Dorsolateral prefrontal cortex (tissue), 120 donors: ENCODE measurements at regions of chr5 and their contacts with region 1.

Region 1: DNA sequence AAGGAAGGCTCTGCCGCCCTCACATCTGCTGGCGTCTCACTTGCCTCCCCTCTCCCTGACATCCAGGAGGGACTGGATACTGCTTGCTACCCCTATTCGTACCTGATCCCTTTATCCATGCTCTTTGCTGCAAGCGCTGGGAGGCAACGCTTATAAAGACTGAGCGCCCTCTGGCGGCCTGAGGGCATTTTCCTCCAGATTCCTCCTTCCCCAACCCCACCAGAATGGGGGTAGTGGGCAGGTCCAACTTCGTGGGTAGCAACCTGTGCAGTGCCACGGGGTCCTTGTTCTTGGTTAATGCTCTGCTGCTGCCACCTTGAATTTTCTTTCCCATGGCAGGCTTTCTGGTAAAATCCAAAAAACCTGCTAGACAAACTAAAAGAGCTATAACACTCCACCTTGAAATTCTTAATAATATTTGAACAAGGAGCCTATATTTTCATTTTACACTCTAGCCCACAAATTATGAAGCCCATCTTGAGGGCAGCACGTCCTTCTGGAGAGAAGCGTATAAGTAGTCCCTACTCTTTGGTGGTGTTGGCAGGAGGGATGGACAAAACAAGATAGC is 52.4 kb downstream of the JADE2 start:
- DNase-seq: peak in 9 of 10 donors; percentile 75 to 85 (median 80)
- H3K4me3 ChIP-seq: peak overlapping the region in 1 of 59 donors; percentile 7
- H3K27ac ChIP-seq: peak overlapping the region in 10 of 59 donors; percentile 0 to 65 (median 21)
- H3K27me3 ChIP-seq: no peaks in the 10 kb centered on the region
- CTCF ChIP-seq: peak; percentile 60 to 92 (median 83)

Region 2: DNA sequence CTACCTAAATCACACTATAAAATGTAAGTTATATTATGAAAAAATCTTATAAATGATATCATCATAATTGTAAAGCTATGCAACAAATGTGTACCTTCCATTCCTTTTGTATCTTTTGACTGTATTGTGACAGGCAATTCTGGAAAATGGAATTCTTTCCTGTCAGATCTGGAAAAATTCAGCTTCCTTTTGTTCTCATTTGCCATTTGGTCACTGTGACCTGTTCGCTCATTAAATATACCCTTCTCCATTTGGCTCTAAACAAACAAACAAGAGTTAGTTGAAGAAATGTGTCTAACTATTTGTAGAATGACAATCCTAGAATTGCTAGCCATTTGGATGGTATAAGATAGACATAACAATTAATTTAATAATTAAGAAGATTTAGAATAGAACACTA is 273.6 kb before region 1 on chr5:
- intact Hi-C with region 1: loop called (anchors 5 kb)
- DNase-seq: no peak
- H3K4me3 ChIP-seq: no peak overlapping the region
- H3K27ac ChIP-seq: no peak overlapping the region
- H3K27me3 ChIP-seq: no peaks in the 10 kb centered on the region
- CTCF ChIP-seq: no peak

Region 3: DNA sequence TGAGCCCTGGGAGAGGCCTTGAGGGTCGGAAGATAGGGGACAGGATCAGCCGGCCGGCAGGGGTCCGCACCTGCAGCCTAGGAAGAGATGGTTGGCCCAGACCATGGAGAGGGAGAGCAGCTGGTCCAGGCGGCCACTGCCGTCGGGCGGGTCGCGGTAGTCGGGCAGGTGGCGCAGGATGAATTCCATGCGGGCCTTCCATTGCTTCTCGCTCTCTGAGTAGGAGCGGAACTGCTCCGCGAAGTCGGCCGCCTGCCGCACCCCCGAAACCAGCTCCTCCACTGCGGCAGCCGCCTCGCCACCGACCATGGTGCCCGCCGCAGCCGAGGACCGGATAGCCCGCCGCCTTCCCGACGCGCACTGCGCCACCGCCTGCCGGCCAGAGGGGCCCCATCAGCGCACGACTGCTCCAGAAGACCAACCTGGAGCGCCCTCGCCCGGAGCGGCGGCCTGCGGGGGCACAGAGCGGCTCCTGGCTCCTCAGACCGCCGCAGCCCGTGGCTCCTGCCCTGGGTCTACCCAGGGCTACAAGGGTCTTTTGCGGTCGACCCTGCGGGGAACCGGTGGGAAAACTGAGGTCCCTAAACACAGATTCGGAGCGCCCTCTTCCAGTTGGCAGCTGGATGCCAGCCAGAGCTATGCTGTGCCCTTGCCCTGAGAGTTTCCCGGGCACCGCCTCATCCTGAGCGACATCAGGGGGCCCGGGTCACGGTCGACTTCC is 166.2 kb before region 1 on chr5 and contains the start of gene CDKN2AIPNL:
- intact Hi-C with region 1: loop called (anchors 2 to 5 kb)
- DNase-seq: peak; percentile 88 to 97 (median 92)
- H3K4me3 ChIP-seq: peak within 1 kb of the TSS; percentile 62 to 99 (median 89)
- H3K27ac ChIP-seq: peak within 1 kb of the TSS; percentile 4 to 95 (median 84)
- H3K27me3 ChIP-seq: no peaks in the 10 kb centered on the region
- CTCF ChIP-seq: peak; percentile 73 to 99 (median 94)
- total RNA-seq, gene CDKN2AIPNL: 16.6 to 49.6 (median 33.7) TPM

Region 4: DNA sequence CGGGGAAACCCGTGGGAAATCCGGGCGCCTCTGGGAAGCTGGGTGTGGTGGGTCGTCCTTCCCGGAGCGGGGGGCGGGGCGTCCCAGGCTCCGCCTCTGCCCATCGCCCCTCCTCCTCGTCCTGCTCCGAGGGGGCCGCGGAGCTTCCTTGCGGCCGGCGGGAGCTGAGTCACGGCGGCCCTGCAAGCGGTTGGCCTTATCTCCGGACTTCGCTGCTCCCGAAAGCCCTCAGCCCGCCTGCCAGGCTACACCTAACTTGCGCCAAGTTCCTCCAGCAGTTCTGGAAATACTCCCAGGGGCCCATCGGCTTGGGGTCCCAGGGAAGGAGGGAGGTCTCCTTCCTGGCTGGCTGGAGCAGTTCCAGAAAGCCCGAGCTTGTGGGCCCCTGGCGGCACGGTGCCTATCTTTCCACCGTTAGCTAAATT is 112.1 kb before region 1 on chr5:
- intact Hi-C with region 1: loop called in 1 of 2 experiments (anchors 5 kb)
- DNase-seq: peak; percentile 69 to 89 (median 76)
- H3K4me3 ChIP-seq: peak overlapping the region; percentile 36 to 79 (median 66)
- H3K27ac ChIP-seq: peak overlapping the region; percentile 76 to 99 (median 96)
- H3K27me3 ChIP-seq: no peaks in the 10 kb centered on the region
- CTCF ChIP-seq: peak in 3 of 56 donors; percentile 5 to 16 (median 12)

Region 5: GRCh38 chr5:134948911-134949310 is 371.0 kb after region 1 on chr5:
- intact Hi-C with region 1: no loop called
- DNase-seq: no peak
- H3K4me3 ChIP-seq: no peak overlapping the region
- H3K27ac ChIP-seq: no peak overlapping the region
- H3K27me3 ChIP-seq: no peaks in the 10 kb centered on the region
- CTCF ChIP-seq: no peak